PC-3 (cell line): ENCODE measurements at regions of chr7 and their contacts with region 1.

Region 1: GRCh38 chr7:116525913-116526861 is 1.4 kb downstream of the CAV1 start:
- DNase-seq: peak; percentile 85
- ATAC-seq: peak; percentile 60
- H3K4me3 ChIP-seq: peak overlapping the region; percentile 97
- H3K27ac ChIP-seq: peak overlapping the region; percentile 74
- H3K4me1 ChIP-seq: peaks cover 72% of the 10 kb centered on the region
- H3K27me3 ChIP-seq: no peaks in the 10 kb centered on the region
- CTCF ChIP-seq: peak; percentile 75

Region 2: GRCh38 chr7:116258734-116259133 is 267.5 kb before region 1 on chr7:
- CTCF ChIA-PET with region 1: interaction called, 9 read pairs
- POLR2A ChIA-PET with region 1: no interaction called
- intact Hi-C with region 1: loop called (anchors 1 kb)
- DNase-seq: peak; percentile 78
- ATAC-seq: 0 out of 2 replicates have a peak, but pooled peaks have one; percentile 16
- H3K4me3 ChIP-seq: no peak overlapping the region
- H3K27ac ChIP-seq: peak overlapping the region; percentile 34; the same call in 1 of the 2 replicates
- H3K4me1 ChIP-seq: peaks cover 18% of the 10 kb centered on the region
- H3K27me3 ChIP-seq: no peaks in the 10 kb centered on the region
- CTCF ChIP-seq: peak; percentile 89

Region 3: DNA sequence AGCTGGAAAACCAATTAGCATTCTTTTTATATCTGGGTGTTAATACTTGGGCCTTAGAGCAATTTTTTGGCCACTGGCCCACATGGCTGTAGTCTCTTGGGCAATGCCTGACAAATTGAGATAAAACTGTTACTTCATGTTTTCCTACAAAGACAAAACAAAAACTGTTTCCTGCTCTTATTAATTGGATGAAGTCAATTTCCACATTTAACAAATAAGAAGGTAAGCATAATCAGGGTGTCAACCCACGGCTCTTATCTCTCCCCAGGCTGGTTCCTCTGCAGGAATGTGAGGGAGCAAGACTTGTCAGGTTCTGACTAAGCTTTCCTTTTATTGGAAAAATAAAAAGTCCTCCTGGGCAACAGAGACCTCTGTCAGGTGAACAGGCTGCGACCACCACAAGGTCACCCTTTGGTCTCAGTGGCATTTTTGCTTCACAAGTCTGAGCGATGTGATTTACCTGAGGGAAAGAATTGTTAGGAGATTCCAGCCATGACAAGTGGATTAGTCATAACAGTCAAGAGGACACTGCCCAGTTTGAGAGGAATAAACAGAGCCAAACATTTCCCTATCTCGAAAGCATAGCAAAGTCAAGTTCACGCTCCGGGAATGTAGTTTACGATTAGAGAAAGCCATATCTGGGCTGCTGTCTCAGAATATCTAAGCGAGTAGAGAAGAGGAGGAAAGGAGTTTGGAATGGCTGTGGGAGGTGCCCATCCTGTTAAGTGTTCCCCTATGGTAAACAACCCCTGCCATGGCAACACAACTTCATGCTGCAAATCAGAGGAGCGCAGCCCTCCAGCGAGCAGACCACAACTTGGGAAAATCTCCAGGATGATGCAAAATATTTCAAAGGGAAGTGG is 171.4 kb before region 1 on chr7:
- CTCF ChIA-PET with region 1: no interaction called
- POLR2A ChIA-PET with region 1: interaction called, 7 read pairs
- intact Hi-C with region 1: loop called (anchors 2 kb)
- DNase-seq: peak; percentile 96
- ATAC-seq: peak; percentile 85
- H3K4me3 ChIP-seq: peak overlapping the region; percentile 51; the same call in 1 of the 2 replicates
- H3K27ac ChIP-seq: peak overlapping the region; percentile 91
- H3K4me1 ChIP-seq: peaks cover 51% of the 10 kb centered on the region
- H3K27me3 ChIP-seq: no peaks in the 10 kb centered on the region
- CTCF ChIP-seq: no peak

Region 4: GRCh38 chr7:116461500-116461899 is 64.7 kb before region 1 on chr7:
- CTCF ChIA-PET with region 1: interaction called, 10 read pairs
- POLR2A ChIA-PET with region 1: interaction called, 9 read pairs
- intact Hi-C with region 1: no loop called
- DNase-seq: peak; percentile 24
- ATAC-seq: peak; percentile 37
- H3K4me3 ChIP-seq: peak overlapping the region; percentile 39; the same call in 1 of the 2 replicates
- H3K27ac ChIP-seq: peak overlapping the region; percentile 38
- H3K4me1 ChIP-seq: peaks cover 38% of the 10 kb centered on the region
- H3K27me3 ChIP-seq: no peaks in the 10 kb centered on the region
- CTCF ChIP-seq: peak; percentile 38; the same call in 1 of the 2 replicates

Region 5: DNA sequence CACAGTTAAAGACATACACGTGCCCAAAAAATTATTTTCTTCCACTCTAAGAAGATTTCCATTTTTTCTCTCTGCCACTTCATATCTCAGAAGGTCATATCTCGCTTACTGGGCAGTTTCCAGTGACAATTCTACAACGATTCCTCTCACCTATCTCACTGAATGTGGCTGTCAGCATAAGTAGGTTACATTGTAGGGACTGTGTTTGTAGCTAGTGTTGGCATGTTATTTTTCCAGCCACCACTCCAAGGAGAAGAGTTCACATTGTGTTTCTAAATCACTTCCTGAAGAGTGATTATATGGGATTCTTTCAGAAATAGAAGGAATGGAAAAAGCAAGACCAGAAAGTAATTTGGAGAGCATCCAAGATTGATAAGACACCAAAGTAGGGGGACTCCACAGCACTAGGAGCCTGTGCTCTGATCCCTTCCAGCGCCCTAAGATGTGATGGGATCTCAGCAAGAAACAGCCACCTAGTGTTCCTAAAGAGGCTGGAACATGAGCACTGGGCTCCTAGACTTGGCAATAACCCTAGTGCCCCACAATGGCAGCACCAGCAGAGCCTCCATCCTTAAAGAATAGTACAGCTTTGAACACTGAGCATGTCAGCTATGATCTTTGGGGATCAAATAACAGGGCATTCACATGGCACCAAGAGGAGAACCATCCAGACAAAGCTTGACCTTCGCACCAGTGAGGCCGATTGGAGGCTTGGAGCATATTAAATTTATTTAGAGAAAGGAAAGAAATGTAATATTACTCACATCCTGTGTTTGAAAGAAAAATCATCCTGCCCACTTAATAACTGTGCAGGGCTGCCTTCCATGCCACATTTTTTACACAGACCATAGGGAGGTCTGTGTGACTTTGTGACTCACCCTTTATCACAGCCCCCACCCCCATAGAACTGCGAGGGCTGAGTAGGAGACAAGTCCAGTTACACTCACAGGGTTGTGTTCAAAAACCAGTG is 50.4 kb after region 1 on chr7:
- CTCF ChIA-PET with region 1: no interaction called
- POLR2A ChIA-PET with region 1: interaction called, 7 read pairs
- intact Hi-C with region 1: loop called (anchors 2 kb)
- DNase-seq: peak; percentile 95
- ATAC-seq: peak; percentile 96
- H3K4me3 ChIP-seq: peak overlapping the region; percentile 38; the same call in 1 of the 2 replicates
- H3K27ac ChIP-seq: peak overlapping the region; percentile 94
- H3K4me1 ChIP-seq: peaks cover 53% of the 10 kb centered on the region
- H3K27me3 ChIP-seq: no peaks in the 10 kb centered on the region
- CTCF ChIP-seq: no peak

Region 6: GRCh38 chr7:116809636-116810266 is 283.6 kb after region 1 on chr7:
- CTCF ChIA-PET with region 1: no interaction called
- POLR2A ChIA-PET with region 1: no interaction called
- intact Hi-C with region 1: loop called (anchors 5 kb)
- DNase-seq: peak; percentile 87
- ATAC-seq: peak; percentile 82
- H3K4me3 ChIP-seq: peak overlapping the region; percentile 42
- H3K27ac ChIP-seq: peak overlapping the region; percentile 76
- H3K4me1 ChIP-seq: peaks cover 38% of the 10 kb centered on the region
- H3K27me3 ChIP-seq: no peaks in the 10 kb centered on the region
- CTCF ChIP-seq: peak; percentile 85